ENCODE measurements at regions of chr4 and their contacts with region 1.

Region 1: GRCh38 chr4:113355550-113356371 is 306.3 kb downstream of the ANK2 start:
- DNase-seq: peak; percentile 68
- CTCF ChIP-seq: peak; percentile 34

Region 2: GRCh38 chr4:113371111-113371510 is 15.3 kb after region 1 on chr4:
- CTCF ChIA-PET with region 1: interaction called, 13 read pairs
- POLR2A ChIA-PET with region 1: no interaction called
- DNase-seq: no peak
- CTCF ChIP-seq: no peak